Activated CD8-positive, alpha-beta T cell treated with anti-CD3 and anti-CD28 coated beads for 36 hours (primary cell): ENCODE measurements at regions of chr15 and their contacts with region 1.

Region 1: DNA sequence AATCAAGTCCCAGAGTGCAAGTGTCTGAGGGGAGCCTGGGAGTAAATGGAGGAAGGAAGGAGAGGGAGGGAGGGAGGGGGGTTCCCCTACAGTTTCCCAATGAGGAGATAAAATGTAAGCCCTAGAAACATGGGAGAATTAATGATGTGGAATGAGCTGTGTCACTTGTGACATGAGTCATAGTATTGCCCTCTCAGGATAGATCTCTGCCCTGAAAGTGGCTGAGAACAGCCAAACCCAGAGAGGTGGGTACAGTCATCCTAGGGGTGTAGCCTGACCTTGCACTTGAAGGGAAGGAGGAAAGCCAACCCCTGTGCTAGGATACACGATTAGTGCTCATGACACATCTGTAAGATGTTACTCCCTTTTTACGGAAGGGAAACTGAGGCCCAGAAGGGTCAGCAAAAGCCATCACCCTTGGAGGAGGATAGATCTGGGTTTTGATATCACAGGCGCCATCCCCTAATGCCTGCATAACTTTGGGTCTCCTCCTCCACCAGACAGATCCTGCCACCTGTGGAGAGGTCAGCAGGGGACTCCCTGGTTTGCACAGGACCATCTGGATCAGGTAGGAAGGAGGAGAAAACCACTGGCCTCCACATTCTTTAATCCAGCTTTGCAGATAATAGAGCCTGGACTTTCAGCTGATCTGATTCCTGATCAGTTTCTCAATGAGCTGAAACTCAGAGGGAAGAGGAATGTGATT is 23.1 kb upstream of the USP3 start:
- DNase-seq: peak; percentile 50
- ATAC-seq: peak; percentile 63
- H3K4me3 Mint-ChIP-seq: no peak overlapping the region
- H3K27ac Mint-ChIP-seq: peak overlapping the region; percentile 65
- H3K4me1 Mint-ChIP-seq: peaks cover 68% of the 10 kb centered on the region
- H3K27me3 Mint-ChIP-seq: no peaks in the 10 kb centered on the region
- CTCF ChIP-seq: no peak

Region 2: GRCh38 chr15:63573533-63573932 is 92.3 kb after region 1 on chr15:
- CTCF ChIA-PET with region 1: no interaction called
- POLR2A ChIA-PET with region 1: no interaction called
- intact Hi-C with region 1: no loop called
- DNase-seq: no peak
- ATAC-seq: no peak
- H3K4me3 Mint-ChIP-seq: no peak overlapping the region
- H3K27ac Mint-ChIP-seq: peak overlapping the region; percentile 60
- H3K4me1 Mint-ChIP-seq: peaks cover 7% of the 10 kb centered on the region
- H3K27me3 Mint-ChIP-seq: no peaks in the 10 kb centered on the region
- CTCF ChIP-seq: no peak

Region 3: DNA sequence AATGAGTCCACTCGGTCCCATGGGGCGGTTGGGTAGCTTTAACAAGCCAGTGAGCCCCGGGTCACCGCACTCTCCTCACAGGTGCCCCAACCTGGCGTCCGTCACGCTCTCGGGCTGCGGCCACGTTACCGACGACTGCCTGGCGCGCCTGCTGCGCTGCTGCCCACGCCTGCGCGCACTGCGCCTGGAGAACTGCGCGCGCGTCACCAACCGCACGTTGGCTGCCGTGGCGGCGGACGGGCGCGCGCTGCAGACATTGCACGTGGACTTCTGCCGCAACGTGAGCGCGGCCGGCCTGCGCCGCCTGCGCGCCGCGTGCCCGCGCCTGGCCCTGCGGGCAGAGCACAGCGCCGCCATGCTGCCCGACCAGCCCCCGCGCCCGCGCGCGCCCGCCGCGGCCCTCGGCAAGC is 119.4 kb after region 1 on chr15:
- CTCF ChIA-PET with region 1: interaction called, 14 read pairs
- POLR2A ChIA-PET with region 1: interaction called, 4 read pairs
- intact Hi-C with region 1: no loop called
- DNase-seq: peak; percentile 93
- ATAC-seq: peak; percentile 76
- H3K4me3 Mint-ChIP-seq: peak overlapping the region; percentile 87
- H3K27ac Mint-ChIP-seq: peak overlapping the region; percentile 96
- H3K4me1 Mint-ChIP-seq: peaks cover 52% of the 10 kb centered on the region
- H3K27me3 Mint-ChIP-seq: no peaks in the 10 kb centered on the region
- CTCF ChIP-seq: no peak